Activated naive CD4-positive, alpha-beta T cell treated with anti-CD3 and anti-CD28 coated beads for 36 hours (primary cell): ENCODE measurements at regions of chr14 and their contacts with region 1.

Region 1: DNA sequence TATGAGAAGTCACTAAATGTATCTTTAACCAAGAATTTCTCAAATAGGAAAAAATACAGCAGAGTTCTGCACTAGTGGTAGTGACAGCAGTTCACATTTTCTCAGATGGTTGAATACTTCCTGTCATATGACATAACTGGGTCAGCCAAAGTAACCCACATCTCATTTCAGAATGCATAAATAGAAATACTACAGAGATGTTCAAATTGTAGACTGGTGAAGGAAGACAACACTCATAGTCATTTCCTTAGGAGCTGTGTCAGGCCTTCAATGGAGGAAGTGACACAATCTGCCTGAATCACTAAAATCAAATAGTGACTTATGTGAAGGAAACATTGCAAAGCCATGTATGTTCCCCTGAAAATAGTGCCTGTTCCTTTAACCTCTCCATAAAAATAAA is 32.4 kb downstream of the FERMT2 start:
- DNase-seq: peak; percentile 47
- H3K4me3 Mint-ChIP-seq: no peak overlapping the region
- H3K27ac Mint-ChIP-seq: peak overlapping the region; percentile 50
- H3K4me1 Mint-ChIP-seq: peaks cover 17% of the 10 kb centered on the region
- H3K27me3 Mint-ChIP-seq: no peaks in the 10 kb centered on the region

Region 2: GRCh38 chr14:52596320-52596719 is 322.2 kb before region 1 on chr14:
- CTCF ChIA-PET with region 1: no interaction called
- intact Hi-C with region 1: no loop called
- DNase-seq: no peak
- H3K4me3 Mint-ChIP-seq: no peak overlapping the region
- H3K27ac Mint-ChIP-seq: no peak overlapping the region
- H3K4me1 Mint-ChIP-seq: no peaks in the 10 kb centered on the region
- H3K27me3 Mint-ChIP-seq: peaks cover 2% of the 10 kb centered on the region

Region 3: DNA sequence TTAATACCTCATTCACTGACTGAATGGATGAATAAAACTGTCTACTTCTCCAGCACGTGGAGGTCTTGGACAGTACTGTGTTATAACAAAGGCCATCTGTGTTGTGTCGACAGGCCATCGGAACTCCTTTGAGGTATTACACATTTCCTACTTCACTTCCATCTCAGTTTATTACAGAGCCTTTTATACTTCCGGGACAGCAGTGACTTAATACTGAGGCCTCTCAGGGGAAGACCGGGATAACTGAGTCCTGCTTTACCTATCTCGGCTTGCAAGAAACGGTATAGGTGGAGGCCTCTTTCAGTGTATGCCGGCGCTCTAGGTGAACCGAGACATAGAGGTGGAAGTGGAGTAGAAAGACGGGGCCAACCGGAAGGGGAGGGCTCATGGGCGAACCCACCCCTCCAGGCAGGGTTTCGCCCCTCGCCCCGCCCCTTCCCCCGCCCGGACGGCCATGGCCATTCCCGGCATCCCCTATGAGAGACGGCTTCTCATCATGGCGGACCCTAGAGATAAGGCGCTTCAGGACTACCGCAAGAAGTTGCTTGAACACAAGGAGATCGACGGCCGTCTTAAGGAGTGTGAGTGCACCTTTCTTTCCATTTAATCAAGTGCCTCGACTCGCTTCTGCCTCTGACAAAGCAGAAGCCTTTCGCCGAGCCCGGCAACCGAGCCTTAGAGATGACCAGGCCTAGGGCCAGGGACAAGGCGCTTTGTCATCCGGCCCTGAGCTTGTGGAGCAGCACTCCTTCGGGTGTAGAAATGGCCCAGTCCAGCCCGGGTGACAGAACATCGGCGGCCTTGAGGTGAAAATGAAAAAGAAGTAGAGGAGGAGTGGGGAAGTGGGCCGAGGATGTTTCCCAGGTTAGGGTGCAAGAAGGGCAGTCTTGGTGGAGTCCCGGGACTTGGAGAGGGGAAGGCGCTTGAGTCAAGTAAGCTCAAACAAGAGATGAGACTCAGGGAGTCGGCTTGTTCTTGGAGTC is 211.5 kb before region 1 on chr14 and contains the start of gene PSMC6:
- CTCF ChIA-PET with region 1: no interaction called
- intact Hi-C with region 1: loop called (anchors 2 kb)
- DNase-seq: peak; percentile 97
- H3K4me3 Mint-ChIP-seq: peak within 1 kb of the TSS; percentile 100
- H3K27ac Mint-ChIP-seq: peak within 1 kb of the TSS; percentile 97
- H3K4me1 Mint-ChIP-seq: peaks cover 47% of the 10 kb centered on the region
- H3K27me3 Mint-ChIP-seq: no peaks in the 10 kb centered on the region
- total RNA-seq, gene PSMC6: 103 to 114 TPM

Region 4: GRCh38 chr14:52824507-52824906 is 94.0 kb before region 1 on chr14:
- CTCF ChIA-PET with region 1: interaction called, 4 read pairs
- intact Hi-C with region 1: loop called (anchors 1 kb)
- DNase-seq: no peak
- H3K4me3 Mint-ChIP-seq: no peak overlapping the region
- H3K27ac Mint-ChIP-seq: no peak overlapping the region
- H3K4me1 Mint-ChIP-seq: peaks cover 2% of the 10 kb centered on the region
- H3K27me3 Mint-ChIP-seq: peaks cover 1% of the 10 kb centered on the region

Region 5: DNA sequence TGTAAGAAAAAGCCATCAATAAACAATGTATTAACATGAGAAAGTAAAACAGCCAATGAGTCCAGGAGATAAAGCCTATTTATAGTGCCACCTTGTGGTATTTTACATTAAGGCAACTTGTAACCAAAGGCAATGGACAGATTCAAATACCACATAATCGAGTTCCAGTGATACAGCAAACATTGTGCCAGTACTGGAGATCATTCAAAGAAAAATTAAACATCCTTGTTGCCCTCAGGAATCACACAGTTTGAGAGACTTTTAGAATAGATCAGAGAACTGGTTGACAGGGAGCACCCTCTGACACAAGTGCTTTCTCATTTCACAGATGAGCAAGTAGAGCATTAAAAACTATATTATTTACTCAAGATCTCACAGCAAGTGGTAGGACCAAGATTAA is 136.5 kb after region 1 on chr14:
- CTCF ChIA-PET with region 1: no interaction called
- intact Hi-C with region 1: loop called (anchors 5 kb)
- DNase-seq: no peak
- H3K4me3 Mint-ChIP-seq: no peak overlapping the region
- H3K27ac Mint-ChIP-seq: no peak overlapping the region
- H3K4me1 Mint-ChIP-seq: peaks cover 3% of the 10 kb centered on the region
- H3K27me3 Mint-ChIP-seq: no peaks in the 10 kb centered on the region

Region 6: GRCh38 chr14:53190938-53191337 is 272.5 kb after region 1 on chr14:
- CTCF ChIA-PET with region 1: no interaction called
- intact Hi-C with region 1: loop called (anchors 1 kb)
- DNase-seq: peak; percentile 72
- H3K4me3 Mint-ChIP-seq: peak overlapping the region; percentile 41
- H3K27ac Mint-ChIP-seq: peak overlapping the region; percentile 22
- H3K4me1 Mint-ChIP-seq: peaks cover 12% of the 10 kb centered on the region
- H3K27me3 Mint-ChIP-seq: no peaks in the 10 kb centered on the region